Motor neuron (in vitro differentiated cells): ENCODE measurements at regions of chr10 and their contacts with region 1.

Region 1: DNA sequence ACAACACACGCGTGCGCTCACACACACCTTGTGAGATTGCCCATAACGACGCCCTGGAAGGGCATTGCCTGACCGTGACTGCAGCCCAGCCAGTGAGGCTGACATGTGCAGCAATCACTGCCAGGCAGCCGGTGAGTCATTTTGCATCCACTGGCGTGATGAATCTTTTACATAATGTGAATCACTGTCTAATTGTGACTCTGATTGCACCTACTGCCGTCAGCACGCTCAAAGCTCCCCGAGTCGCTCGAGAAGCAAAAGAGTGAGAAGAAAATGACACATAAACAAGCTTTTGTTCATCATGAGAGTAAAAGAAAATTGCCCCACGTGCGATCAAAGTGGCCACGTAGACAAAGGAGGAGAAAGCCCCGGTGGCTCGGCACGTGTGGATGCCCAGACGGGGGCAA is 117.4 kb upstream of the PFKP start:
- ATAC-seq: peak; percentile 96 to 100 (median 98)
- H3K4me3 ChIP-seq: no peak overlapping the region
- H3K27ac ChIP-seq: no peak overlapping the region
- H3K4me1 ChIP-seq: no peaks in the 10 kb centered on the region

Region 2: GRCh38 chr10:2340831-2341647 is 608.9 kb before region 1 on chr10:
- in situ Hi-C with region 1: no loop called
- ATAC-seq: no peak
- H3K4me3 ChIP-seq: no peak overlapping the region
- H3K27ac ChIP-seq: no peak overlapping the region
- H3K4me1 ChIP-seq: peaks cover under 1 to 4% of the 10 kb centered on the region in 2 donors

Region 3: GRCh38 chr10:2631557-2632071 is 318.3 kb before region 1 on chr10:
- in situ Hi-C with region 1: loop called in 1 of 9 experiments (anchors 25 kb)
- ATAC-seq: peak in 4 of 8 experiments; percentile 28 to 61 (median 40)
- H3K4me3 ChIP-seq: no peak overlapping the region
- H3K27ac ChIP-seq: no peak overlapping the region
- H3K4me1 ChIP-seq: peaks cover 8 to 26% of the 10 kb centered on the region in 2 donors